ENCODE measurements at regions of chr5 and their contacts with region 1.

Region 1: DNA sequence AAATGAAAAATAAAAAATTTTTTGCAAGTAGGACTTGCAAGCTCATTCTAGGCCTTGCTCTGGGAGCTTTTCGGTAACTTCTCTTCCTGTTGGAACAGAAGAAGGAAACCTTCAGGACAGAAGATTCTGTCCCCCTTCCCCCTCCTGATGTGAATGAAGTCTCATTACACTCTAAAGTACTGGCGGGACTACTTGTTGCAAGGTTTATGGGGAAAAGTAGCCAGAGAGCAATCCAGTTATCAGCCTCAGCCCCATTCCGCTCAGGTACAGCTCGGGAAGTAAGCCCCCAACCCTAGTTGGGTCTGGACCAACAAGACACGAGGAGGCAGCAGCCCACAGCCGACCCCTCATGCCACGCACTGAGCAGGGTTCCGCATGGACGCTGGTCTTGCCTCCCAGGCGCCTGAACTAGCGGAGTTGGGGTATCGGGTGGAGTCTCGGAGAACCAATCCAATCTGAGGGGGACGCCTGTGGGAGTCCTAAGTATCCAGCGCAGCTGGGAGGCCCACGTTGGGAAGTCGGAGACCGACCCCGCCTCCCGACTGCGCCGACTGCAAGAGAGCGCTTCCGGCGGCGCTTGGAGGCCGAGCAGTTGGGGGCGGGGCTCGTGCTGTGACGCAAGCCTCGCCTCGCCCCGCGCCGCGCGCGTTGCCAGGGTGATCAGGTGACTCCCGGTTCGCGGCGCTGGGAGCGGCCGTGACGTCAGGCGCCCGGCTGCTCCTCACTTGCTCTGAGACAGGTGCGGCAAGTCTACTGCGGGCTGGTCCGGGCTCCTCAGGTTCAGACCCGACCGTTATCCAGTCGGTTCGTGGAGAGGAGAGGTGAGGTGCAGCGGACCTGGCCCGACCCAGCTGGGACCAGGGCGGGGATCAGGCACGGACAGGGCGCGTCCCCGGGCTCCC is at the start of gene CYSTM1:
- DNase-seq: peak; percentile 99
- ATAC-seq: peak; percentile 86
- H3K4me3 ChIP-seq: peak within 1 kb of the TSS; percentile 58 to 95 (median 94)
- H3K4me3 Mint-ChIP-seq: peak within 1 kb of the TSS; percentile 94
- H3K27ac ChIP-seq: peak within 1 kb of the TSS; percentile 84 to 98
- H3K27ac Mint-ChIP-seq: peak within 1 kb of the TSS; percentile 94
- H3K4me1 ChIP-seq: peaks cover 9 to 16% of the 10 kb centered on the region in 2 donors
- H3K4me1 Mint-ChIP-seq: peaks cover 15% of the 10 kb centered on the region
- H3K27me3 ChIP-seq: peaks cover 0 to 7% (median 0%) of the 10 kb centered on the region in 4 experiments
- H3K27me3 Mint-ChIP-seq: no peaks in the 10 kb centered on the region
- CTCF ChIP-seq: no peak
- total RNA-seq, gene CYSTM1: 17.0 and 18.7 TPM in 2 replicates

Region 2: GRCh38 chr5:138331449-138332368 is 1843.0 kb before region 1 on chr5 and contains the start of gene CDC25C:
- CTCF ChIA-PET with region 1: no interaction called
- POLR2A ChIA-PET with region 1: no interaction called
- intact Hi-C with region 1: loop called (anchors 10 kb)
- DNase-seq: peak; percentile 97
- ATAC-seq: peak; percentile 100
- H3K4me3 ChIP-seq: peak within 1 kb of the TSS; percentile 60 to 75 (median 72)
- H3K4me3 Mint-ChIP-seq: peak within 1 kb of the TSS; percentile 87
- H3K27ac ChIP-seq: peak within 1 kb of the TSS in 1 of 2 donors; percentile 23
- H3K27ac Mint-ChIP-seq: peak within 1 kb of the TSS; percentile 61
- H3K4me1 ChIP-seq: peaks cover 7 to 15% of the 10 kb centered on the region in 2 donors
- H3K4me1 Mint-ChIP-seq: peaks cover 14% of the 10 kb centered on the region
- H3K27me3 ChIP-seq: no peaks in the 10 kb centered on the region
- H3K27me3 Mint-ChIP-seq: no peaks in the 10 kb centered on the region
- CTCF ChIP-seq: no peak
- total RNA-seq, gene CDC25C: not detected in 2 replicates

Region 3: DNA sequence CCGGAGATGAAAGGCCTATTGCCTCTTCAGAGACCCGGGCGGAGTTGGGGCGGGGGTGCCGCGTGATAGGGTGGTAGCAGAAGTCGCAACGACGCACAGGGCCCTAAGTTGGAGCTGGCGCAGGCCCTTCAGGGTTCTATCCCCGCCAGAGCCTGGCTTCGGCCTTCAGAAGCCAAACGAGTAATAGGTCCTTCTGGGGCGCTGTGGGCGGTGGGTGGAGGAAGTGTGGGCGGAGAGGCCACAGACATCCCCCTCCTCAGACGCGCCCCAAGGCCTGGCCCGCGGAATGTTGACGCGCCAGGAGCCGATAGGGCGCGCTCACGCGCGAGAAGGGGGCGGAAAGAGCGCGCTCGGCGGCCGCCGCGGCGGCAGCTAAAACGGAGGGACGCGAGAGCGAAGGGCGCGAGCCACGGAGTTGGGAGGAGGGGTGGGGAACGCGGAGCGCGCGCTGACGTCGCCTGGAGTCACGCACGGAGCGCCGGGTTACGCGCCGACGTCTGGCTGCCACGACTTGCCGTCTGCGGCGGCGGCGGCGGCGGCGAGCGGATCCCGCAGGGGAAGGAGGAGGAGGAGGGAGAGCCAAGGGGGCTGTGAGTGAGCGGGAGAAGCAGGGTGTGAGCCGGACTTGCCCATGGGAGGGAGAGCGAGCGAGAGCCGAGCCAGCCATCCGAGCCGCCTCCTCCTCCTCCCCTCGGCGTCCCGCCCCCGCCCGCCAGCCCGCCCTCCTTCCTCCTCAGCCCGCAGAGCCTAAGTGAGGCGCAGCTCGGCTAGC is 67.2 kb before region 1 on chr5:
- CTCF ChIA-PET with region 1: no interaction called
- POLR2A ChIA-PET with region 1: interaction called, 6 read pairs
- intact Hi-C with region 1: loop called (anchors 1 kb)
- DNase-seq: peak; percentile 98
- ATAC-seq: peak; percentile 85
- H3K4me3 ChIP-seq: peak overlapping the region in 4 of 5 experiments; percentile 60 to 75 (median 68)
- H3K4me3 Mint-ChIP-seq: peak overlapping the region; percentile 96
- H3K27ac ChIP-seq: peak overlapping the region; percentile 97 to 99
- H3K27ac Mint-ChIP-seq: peak overlapping the region; percentile 99
- H3K4me1 ChIP-seq: peaks cover 35% of the 10 kb centered on the region in 2 donors
- H3K4me1 Mint-ChIP-seq: peaks cover 46% of the 10 kb centered on the region
- H3K27me3 ChIP-seq: peaks cover 5 to 23% (median 13%) of the 10 kb centered on the region in 4 experiments
- H3K27me3 Mint-ChIP-seq: peaks cover 20% of the 10 kb centered on the region
- CTCF ChIP-seq: peak; percentile 43

Region 4: DNA sequence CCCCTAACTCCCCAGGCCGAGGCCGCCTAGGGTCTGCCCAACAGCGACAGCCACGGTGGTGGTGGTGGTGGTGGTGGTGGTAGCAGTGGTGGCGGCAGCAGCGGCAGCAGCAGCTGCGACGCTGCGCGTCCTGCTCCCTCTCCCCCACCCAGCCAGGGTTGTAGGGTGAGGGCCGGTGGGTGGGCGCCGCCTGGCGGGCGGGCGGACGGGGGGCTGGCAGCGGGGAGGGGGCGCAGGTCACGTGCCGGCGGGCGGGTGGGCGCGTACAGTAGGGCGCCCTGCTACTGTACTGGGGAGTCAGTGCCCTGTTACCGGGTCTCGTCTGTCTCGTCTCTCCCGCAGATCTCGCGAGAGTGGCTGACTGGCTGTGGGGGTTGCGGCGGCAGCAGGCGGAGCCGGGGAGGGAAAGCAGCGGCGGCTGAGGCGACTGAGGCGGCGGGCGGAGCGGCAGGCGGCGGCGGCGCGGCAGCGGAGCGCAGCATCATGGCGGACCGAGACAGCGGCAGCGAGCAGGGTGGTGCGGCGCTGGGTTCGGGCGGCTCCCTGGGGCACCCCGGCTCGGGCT is 60.9 kb before region 1 on chr5 and contains the start of gene PURA:
- CTCF ChIA-PET with region 1: interaction called, 3 read pairs
- POLR2A ChIA-PET with region 1: interaction called, 5 read pairs
- intact Hi-C with region 1: loop called (anchors 2 kb)
- DNase-seq: peak; percentile 96
- ATAC-seq: peak; percentile 91
- H3K4me3 ChIP-seq: peak within 1 kb of the TSS; percentile 49 to 82 (median 78)
- H3K4me3 Mint-ChIP-seq: peak within 1 kb of the TSS; percentile 98
- H3K27ac ChIP-seq: peak within 1 kb of the TSS; percentile 72 to 87
- H3K27ac Mint-ChIP-seq: peak within 1 kb of the TSS; percentile 99
- H3K4me1 ChIP-seq: peaks cover 40 to 58% of the 10 kb centered on the region in 2 donors
- H3K4me1 Mint-ChIP-seq: peaks cover 71% of the 10 kb centered on the region
- H3K27me3 ChIP-seq: peaks cover 5 to 19% (median 11%) of the 10 kb centered on the region in 4 experiments
- H3K27me3 Mint-ChIP-seq: peaks cover 11% of the 10 kb centered on the region
- CTCF ChIP-seq: peak; percentile 17
- total RNA-seq, gene PURA: 23.5 and 26.0 TPM in 2 replicates

Region 5: DNA sequence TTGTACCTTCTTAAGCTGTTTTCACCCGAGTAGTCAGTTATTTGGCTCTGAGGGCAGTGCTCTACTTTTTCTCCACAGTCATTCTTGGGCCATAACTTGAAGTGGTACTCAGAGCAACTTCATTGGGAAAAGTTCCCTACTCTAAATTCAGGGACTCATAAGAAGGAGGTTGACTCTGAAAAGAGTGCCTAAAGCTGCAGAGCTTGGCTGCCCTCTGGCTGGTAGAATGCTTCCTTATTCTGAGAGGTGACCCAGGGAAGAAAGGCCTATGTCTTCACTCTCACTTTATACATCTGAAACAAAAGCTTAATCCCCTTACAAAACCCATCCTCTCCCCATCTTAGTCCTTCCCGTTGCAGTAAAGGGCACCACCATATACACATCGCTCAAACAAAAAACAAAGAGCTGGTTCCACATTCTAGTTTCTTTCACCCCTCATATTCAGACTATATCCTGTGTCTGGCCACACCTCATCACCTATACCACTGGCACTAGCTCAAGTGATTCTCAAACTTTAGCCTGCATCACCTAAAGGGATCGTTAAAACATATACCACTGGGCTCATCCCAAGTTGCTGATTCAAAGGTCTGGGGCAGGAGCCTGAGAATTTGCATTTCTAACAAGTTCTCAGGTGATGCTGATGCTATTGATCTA is 41.1 kb before region 1 on chr5:
- CTCF ChIA-PET with region 1: no interaction called
- POLR2A ChIA-PET with region 1: no interaction called
- intact Hi-C with region 1: no loop called
- DNase-seq: no peak
- ATAC-seq: no peak
- H3K4me3 ChIP-seq: no peak overlapping the region
- H3K4me3 Mint-ChIP-seq: no peak overlapping the region
- H3K27ac ChIP-seq: no peak overlapping the region
- H3K27ac Mint-ChIP-seq: no peak overlapping the region
- H3K4me1 ChIP-seq: peaks cover 8 to 11% of the 10 kb centered on the region in 2 donors
- H3K4me1 Mint-ChIP-seq: peaks cover 32% of the 10 kb centered on the region
- H3K27me3 ChIP-seq: no peaks in the 10 kb centered on the region
- H3K27me3 Mint-ChIP-seq: no peaks in the 10 kb centered on the region
- CTCF ChIP-seq: no peak

Region 6: GRCh38 chr5:140157032-140157803 is 17.5 kb before region 1 on chr5:
- CTCF ChIA-PET with region 1: interaction called, 5 read pairs
- POLR2A ChIA-PET with region 1: no interaction called
- intact Hi-C with region 1: loop called (anchors 1 kb)
- DNase-seq: peak; percentile 89
- ATAC-seq: peak; percentile 100
- H3K4me3 ChIP-seq: peak overlapping the region in 3 of 5 experiments; percentile 1 to 26 (median 20)
- H3K4me3 Mint-ChIP-seq: peak overlapping the region; percentile 68
- H3K27ac ChIP-seq: no peak overlapping the region
- H3K27ac Mint-ChIP-seq: no peak overlapping the region
- H3K4me1 ChIP-seq: peaks cover 7 to 17% of the 10 kb centered on the region in 2 donors
- H3K4me1 Mint-ChIP-seq: peaks cover 9% of the 10 kb centered on the region
- H3K27me3 ChIP-seq: no peaks in the 10 kb centered on the region
- H3K27me3 Mint-ChIP-seq: no peaks in the 10 kb centered on the region
- CTCF ChIP-seq: peak; percentile 88

Region 7: GRCh38 chr5:140284013-140284412 is 109.3 kb after region 1 on chr5:
- CTCF ChIA-PET with region 1: no interaction called
- POLR2A ChIA-PET with region 1: no interaction called
- intact Hi-C with region 1: loop called (anchors 1 kb)
- DNase-seq: no peak
- ATAC-seq: no peak
- H3K4me3 ChIP-seq: peak overlapping the region in 1 of 5 experiments; percentile 66
- H3K4me3 Mint-ChIP-seq: peak overlapping the region; percentile 88
- H3K27ac ChIP-seq: peak overlapping the region in 1 of 2 donors; percentile 60
- H3K27ac Mint-ChIP-seq: peak overlapping the region; percentile 59
- H3K4me1 ChIP-seq: peaks cover 15 to 19% of the 10 kb centered on the region in 2 donors
- H3K4me1 Mint-ChIP-seq: peaks cover 27% of the 10 kb centered on the region
- H3K27me3 ChIP-seq: no peaks in the 10 kb centered on the region
- H3K27me3 Mint-ChIP-seq: no peaks in the 10 kb centered on the region
- CTCF ChIP-seq: no peak

Measured in B cell (primary cell).